Panc1 (cell line): ENCODE measurements at regions of chr2 and their contacts with region 1.

Region 1: GRCh38 chr2:237474931-237475703 is 11.9 kb upstream of the MLPH start:
- DNase-seq: no peak
- ATAC-seq: peak; percentile 90
- H3K4me3 ChIP-seq: peak overlapping the region; percentile 57 to 77
- H3K27ac ChIP-seq: peak overlapping the region; percentile 84
- H3K4me1 ChIP-seq: peaks cover 14% of the 10 kb centered on the region
- H3K27me3 ChIP-seq: no peaks in the 10 kb centered on the region
- CTCF ChIP-seq: peak; percentile 98

Region 2: GRCh38 chr2:237154082-237154638 is 321.0 kb before region 1 on chr2:
- CTCF ChIA-PET with region 1: no interaction called
- POLR2A ChIA-PET with region 1: no interaction called
- in situ Hi-C with region 1: no loop called
- intact Hi-C with region 1: loop called (anchors 10 kb)
- DNase-seq: no peak
- ATAC-seq: peak; percentile 74
- H3K4me3 ChIP-seq: no peak overlapping the region
- H3K27ac ChIP-seq: peak overlapping the region; percentile 55
- H3K4me1 ChIP-seq: no peaks in the 10 kb centered on the region; the same call in 1 of the 2 replicates
- H3K27me3 ChIP-seq: no peaks in the 10 kb centered on the region
- CTCF ChIP-seq: peak; percentile 90

Region 3: GRCh38 chr2:237421542-237422116 is 53.5 kb before region 1 on chr2:
- CTCF ChIA-PET with region 1: interaction called, 10 read pairs
- POLR2A ChIA-PET with region 1: no interaction called
- in situ Hi-C with region 1: no loop called
- intact Hi-C with region 1: no loop called
- DNase-seq: no peak
- ATAC-seq: peak; percentile 85
- H3K4me3 ChIP-seq: no peak overlapping the region
- H3K27ac ChIP-seq: peak overlapping the region; percentile 60; the same call in 1 of the 2 replicates
- H3K4me1 ChIP-seq: no peaks in the 10 kb centered on the region
- H3K27me3 ChIP-seq: no peaks in the 10 kb centered on the region
- CTCF ChIP-seq: peak; percentile 82

Region 4: GRCh38 chr2:237512774-237513466 is 37.8 kb after region 1 on chr2:
- CTCF ChIA-PET with region 1: interaction called, 11 read pairs
- POLR2A ChIA-PET with region 1: no interaction called
- in situ Hi-C with region 1: no loop called
- intact Hi-C with region 1: no loop called
- DNase-seq: peak; percentile 52
- ATAC-seq: peak; percentile 91
- H3K4me3 ChIP-seq: no peak overlapping the region
- H3K27ac ChIP-seq: peak overlapping the region; percentile 39; the same call in 1 of the 2 replicates
- H3K4me1 ChIP-seq: peaks cover 8% of the 10 kb centered on the region
- H3K27me3 ChIP-seq: no peaks in the 10 kb centered on the region
- CTCF ChIP-seq: peak; percentile 97

Region 5: GRCh38 chr2:237603718-237604362 is 128.7 kb after region 1 on chr2:
- CTCF ChIA-PET with region 1: no interaction called
- POLR2A ChIA-PET with region 1: no interaction called
- in situ Hi-C with region 1: no loop called
- intact Hi-C with region 1: no loop called
- DNase-seq: no peak
- ATAC-seq: peak; percentile 69
- H3K4me3 ChIP-seq: no peak overlapping the region; a peak in 1 of 4 replicates
- H3K27ac ChIP-seq: peak overlapping the region; percentile 32; the same call in 1 of the 2 replicates
- H3K4me1 ChIP-seq: peaks cover 7% of the 10 kb centered on the region
- H3K27me3 ChIP-seq: no peaks in the 10 kb centered on the region
- CTCF ChIP-seq: no peak